CD4-positive, alpha-beta memory T cell (primary cell): ENCODE measurements at regions of chr17 and their contacts with region 1.

Region 1: GRCh38 chr17:38982858-38983746 is 15.9 kb upstream of the FBXO47 start:
- DNase-seq: peak; percentile 58 to 67 (median 59)
- H3K4me3 ChIP-seq: no peak overlapping the region
- H3K4me3 Mint-ChIP-seq: no peak overlapping the region
- H3K27ac ChIP-seq: no peak overlapping the region
- H3K27ac Mint-ChIP-seq: no peak overlapping the region
- H3K4me1 ChIP-seq: no peaks in the 10 kb centered on the region
- H3K4me1 Mint-ChIP-seq: peaks cover 0 to 4% (median 2%) of the 10 kb centered on the region in 4 donors
- H3K27me3 ChIP-seq: no peaks in the 10 kb centered on the region
- H3K27me3 Mint-ChIP-seq: peaks cover 0 to 1% of the 10 kb centered on the region in 2 donors

Region 2: DNA sequence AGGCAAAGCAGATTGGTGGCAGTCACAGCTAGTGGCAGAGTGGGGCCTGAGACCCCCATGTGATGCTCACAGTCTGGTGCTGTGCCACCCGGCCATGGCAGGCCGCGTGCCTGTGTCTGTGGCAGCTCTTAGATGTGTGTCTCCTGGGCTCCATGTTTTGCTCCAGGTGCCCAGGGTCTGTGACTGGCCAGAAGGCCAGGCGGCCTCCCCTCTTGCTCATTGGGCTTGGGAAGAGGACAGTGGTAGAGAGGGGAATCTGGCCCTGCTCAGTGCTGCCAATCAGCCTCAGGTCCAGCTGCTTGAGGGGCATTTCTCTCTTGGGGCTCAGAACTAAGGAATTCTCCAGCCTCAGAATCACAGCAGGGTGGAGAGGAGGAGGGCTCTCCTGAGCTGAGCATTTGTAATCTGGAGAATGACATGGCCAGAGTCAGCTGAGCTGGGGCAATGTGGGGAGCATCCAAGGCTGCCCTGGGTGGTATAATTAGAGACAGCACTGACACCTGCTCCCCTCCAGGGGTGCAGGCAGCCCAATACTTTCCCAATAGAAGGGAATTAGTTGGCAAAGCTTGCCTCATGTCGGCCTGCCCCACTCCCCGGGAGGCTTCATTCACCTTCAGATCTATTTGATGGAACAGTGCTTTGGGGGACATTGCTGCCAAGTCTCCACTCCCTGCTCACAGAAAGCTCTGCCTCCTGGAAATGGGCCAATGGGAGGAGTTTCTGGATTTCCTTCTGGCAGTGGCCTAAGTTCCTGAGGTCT is 60.4 kb before region 1 on chr17:
- CTCF ChIA-PET with region 1: interaction called, 13 read pairs
- POLR2A ChIA-PET with region 1: no interaction called
- intact Hi-C with region 1: no loop called
- DNase-seq: no peak
- H3K4me3 ChIP-seq: no peak overlapping the region
- H3K4me3 Mint-ChIP-seq: no peak overlapping the region
- H3K27ac ChIP-seq: no peak overlapping the region
- H3K27ac Mint-ChIP-seq: peak overlapping the region in 1 of 7 donors; percentile 17
- H3K4me1 ChIP-seq: peaks cover 19% of the 10 kb centered on the region
- H3K4me1 Mint-ChIP-seq: peaks cover 24 to 32% (median 29%) of the 10 kb centered on the region in 4 donors
- H3K27me3 ChIP-seq: no peaks in the 10 kb centered on the region
- H3K27me3 Mint-ChIP-seq: no peaks in the 10 kb centered on the region

Region 3: GRCh38 chr17:39001703-39002637 is 18.9 kb after region 1 on chr17:
- CTCF ChIA-PET with region 1: interaction called, 13 read pairs
- POLR2A ChIA-PET with region 1: no interaction called
- intact Hi-C with region 1: no loop called
- DNase-seq: no peak
- H3K4me3 ChIP-seq: no peak overlapping the region
- H3K4me3 Mint-ChIP-seq: peak overlapping the region in 4 of 8 donors; percentile 24 to 82 (median 33)
- H3K27ac ChIP-seq: no peak overlapping the region
- H3K27ac Mint-ChIP-seq: peak overlapping the region in 5 of 7 donors; percentile 0 to 89 (median 49)
- H3K4me1 ChIP-seq: peaks cover 16% of the 10 kb centered on the region
- H3K4me1 Mint-ChIP-seq: peaks cover 20 to 34% (median 27%) of the 10 kb centered on the region in 4 donors
- H3K27me3 ChIP-seq: no peaks in the 10 kb centered on the region
- H3K27me3 Mint-ChIP-seq: peaks cover 3 to 4% of the 10 kb centered on the region in 2 donors

Region 4: GRCh38 chr17:39069114-39069756 is 86.1 kb after region 1 on chr17:
- CTCF ChIA-PET with region 1: interaction called, 11 read pairs
- POLR2A ChIA-PET with region 1: no interaction called
- intact Hi-C with region 1: loop called (anchors 1 kb)
- DNase-seq: peak in 4 of 5 donors; percentile 44 to 55 (median 52)
- H3K4me3 ChIP-seq: no peak overlapping the region
- H3K4me3 Mint-ChIP-seq: peak overlapping the region in 1 of 8 donors; percentile 3
- H3K27ac ChIP-seq: no peak overlapping the region
- H3K27ac Mint-ChIP-seq: peak overlapping the region in 4 of 7 donors; percentile 41 to 75 (median 54)
- H3K4me1 ChIP-seq: no peaks in the 10 kb centered on the region
- H3K4me1 Mint-ChIP-seq: peaks cover 4 to 9% (median 5%) of the 10 kb centered on the region in 4 donors
- H3K27me3 ChIP-seq: no peaks in the 10 kb centered on the region
- H3K27me3 Mint-ChIP-seq: peaks cover 0 to 2% of the 10 kb centered on the region in 2 donors

Region 5: DNA sequence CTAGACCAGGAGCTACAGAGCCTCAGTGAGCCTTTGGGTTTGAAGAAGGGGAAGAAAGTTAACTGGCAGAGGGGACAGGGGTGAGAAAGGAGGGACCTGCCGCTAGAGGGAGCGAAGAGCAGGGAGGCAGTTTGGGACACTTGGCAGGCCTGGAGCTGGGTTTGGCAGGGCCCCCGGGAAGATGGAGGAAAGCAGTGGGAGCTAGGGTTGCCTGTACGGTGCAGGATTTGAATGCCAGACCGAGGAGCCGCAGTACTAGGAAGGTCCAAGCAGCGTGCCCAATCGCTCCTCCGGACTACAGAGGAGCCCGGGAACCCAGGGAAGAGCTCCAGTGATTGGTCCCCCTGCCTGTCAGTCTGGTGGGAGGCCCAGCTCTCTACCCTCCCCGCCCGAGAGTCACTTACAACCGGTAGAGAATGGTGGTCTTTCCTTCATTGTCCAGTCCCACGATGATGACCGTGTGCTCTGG is 181.6 kb after region 1 on chr17:
- CTCF ChIA-PET with region 1: interaction called, 69 read pairs
- POLR2A ChIA-PET with region 1: interaction called, 5 read pairs
- intact Hi-C with region 1: no loop called
- DNase-seq: peak; percentile 70 to 77 (median 75)
- H3K4me3 ChIP-seq: peak overlapping the region; percentile 61
- H3K4me3 Mint-ChIP-seq: peak overlapping the region; percentile 86 to 96 (median 90)
- H3K27ac ChIP-seq: peak overlapping the region; percentile 28
- H3K27ac Mint-ChIP-seq: peak overlapping the region in 5 of 7 donors; percentile 0 to 90 (median 54)
- H3K4me1 ChIP-seq: peaks cover 24% of the 10 kb centered on the region
- H3K4me1 Mint-ChIP-seq: peaks cover 8 to 29% (median 16%) of the 10 kb centered on the region in 4 donors
- H3K27me3 ChIP-seq: no peaks in the 10 kb centered on the region
- H3K27me3 Mint-ChIP-seq: peaks cover 14 to 17% of the 10 kb centered on the region in 2 donors

Region 6: DNA sequence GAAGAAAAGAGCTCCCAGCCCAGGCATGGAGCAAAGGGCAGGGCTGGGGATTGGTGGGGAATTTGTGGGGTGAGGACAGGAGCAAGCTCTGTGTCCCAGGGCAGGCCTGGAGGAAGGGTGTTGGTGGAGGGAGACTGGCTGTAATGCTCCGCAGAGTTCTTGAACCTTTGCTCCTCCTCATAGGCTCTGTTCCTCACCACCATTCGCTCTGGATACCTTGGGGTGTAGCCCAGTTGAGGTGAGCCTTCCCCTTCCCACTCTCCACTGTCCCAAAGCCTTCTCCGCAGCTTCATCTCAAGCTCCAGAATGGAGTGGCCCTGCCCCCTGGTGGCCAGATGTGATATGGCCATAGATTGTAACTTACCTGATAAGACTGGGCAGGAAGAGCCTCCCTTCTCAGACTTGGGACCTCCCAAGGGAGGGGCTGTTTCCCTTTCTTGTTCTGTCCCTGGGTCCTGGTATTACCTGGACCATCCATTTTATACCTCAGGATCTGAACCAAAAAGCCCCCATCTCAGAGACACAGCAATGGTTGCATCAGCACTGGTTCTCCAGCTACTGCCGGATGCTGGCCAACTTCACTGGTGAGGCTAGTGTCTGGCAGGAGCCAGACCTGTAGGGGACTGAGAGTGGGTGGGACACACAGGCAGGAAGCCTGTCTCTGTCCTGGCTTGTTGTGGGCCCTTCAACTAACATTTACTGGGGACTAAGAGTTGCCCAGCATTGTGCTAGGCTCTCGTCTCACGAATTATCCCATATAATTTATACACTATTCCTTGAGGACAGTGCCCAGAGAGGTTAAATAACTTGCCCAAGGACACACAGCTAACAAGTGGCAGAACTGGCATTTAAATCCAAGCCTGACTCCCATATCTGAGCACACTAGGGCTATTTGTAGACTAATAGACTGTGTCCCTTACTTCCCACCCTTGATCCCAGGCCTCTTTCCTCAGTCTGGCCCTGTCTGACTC is 261.8 kb after region 1 on chr17:
- CTCF ChIA-PET with region 1: interaction called, 41 read pairs
- POLR2A ChIA-PET with region 1: interaction called, 4 read pairs
- intact Hi-C with region 1: loop called (anchors 1 kb)
- DNase-seq: peak; percentile 74 to 83 (median 78)
- H3K4me3 ChIP-seq: no peak overlapping the region
- H3K4me3 Mint-ChIP-seq: peak overlapping the region in 1 of 8 donors; percentile 57
- H3K27ac ChIP-seq: no peak overlapping the region
- H3K27ac Mint-ChIP-seq: peak overlapping the region in 5 of 7 donors; percentile 6 to 92 (median 44)
- H3K4me1 ChIP-seq: peaks cover 11% of the 10 kb centered on the region
- H3K4me1 Mint-ChIP-seq: peaks cover 5 to 14% (median 9%) of the 10 kb centered on the region in 4 donors
- H3K27me3 ChIP-seq: no peaks in the 10 kb centered on the region
- H3K27me3 Mint-ChIP-seq: peaks cover 2% of the 10 kb centered on the region in 2 donors